Dendritic cell treated with granulocyte-macrophage colony-stimulating factor and Interleukin-4, amounts not matched to agents 40 ng/mL and 50 ng/mL, for 4 days (primary cell): ENCODE measurements at regions of chr10 and their contacts with region 1.

Region 1: GRCh38 chr10:70233109-70233938 is at the start of gene PPA1:
- H3K4me3 Mint-ChIP-seq: peak within 1 kb of the TSS; percentile 93
- H3K27ac Mint-ChIP-seq: peak within 1 kb of the TSS; percentile 83
- H3K4me1 Mint-ChIP-seq: peaks cover 17% of the 10 kb centered on the region
- H3K27me3 Mint-ChIP-seq: peaks cover 5% of the 10 kb centered on the region

Region 2: DNA sequence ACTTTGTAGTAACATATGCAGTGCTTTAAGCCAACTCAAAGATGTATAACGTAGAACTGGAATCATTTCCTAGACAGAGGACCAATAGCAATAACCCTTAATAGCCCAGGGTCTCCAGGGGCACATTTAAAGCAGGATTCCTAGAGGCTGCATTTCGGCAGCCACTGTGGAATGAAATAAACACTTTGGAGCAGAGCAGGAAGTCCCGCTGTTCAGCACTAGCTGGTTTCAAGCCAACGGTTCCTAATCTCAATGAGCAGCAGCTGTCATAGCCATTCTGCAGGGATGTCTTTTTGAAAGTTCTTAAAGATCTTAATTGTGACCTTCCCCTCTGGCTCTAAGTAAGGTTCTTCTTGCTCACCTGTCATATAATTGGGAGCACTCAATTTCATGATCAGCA is 199.1 kb before region 1 on chr10:
- intact Hi-C with region 1: no loop called
- H3K4me3 Mint-ChIP-seq: no peak overlapping the region
- H3K27ac Mint-ChIP-seq: no peak overlapping the region
- H3K4me1 Mint-ChIP-seq: no peaks in the 10 kb centered on the region
- H3K27me3 Mint-ChIP-seq: peaks cover 15% of the 10 kb centered on the region

Region 3: GRCh38 chr10:70255329-70256299 is 22.3 kb after region 1 on chr10:
- intact Hi-C with region 1: loop called (anchors 2 kb)
- H3K4me3 Mint-ChIP-seq: peak overlapping the region; percentile 45
- H3K27ac Mint-ChIP-seq: no peak overlapping the region
- H3K4me1 Mint-ChIP-seq: peaks cover 14% of the 10 kb centered on the region
- H3K27me3 Mint-ChIP-seq: peaks cover 92% of the 10 kb centered on the region